Adrenal gland (tissue), 19 donors: ENCODE measurements at regions of chr17 and their contacts with region 1.

Region 1: GRCh38 chr17:42312285-42313130 is 24.2 kb downstream of the STAT5A start:
- DNase-seq: peak; percentile 92 to 96 (median 94)
- H3K4me3 ChIP-seq: peak overlapping the region in 1 of 4 donors; percentile 21
- H3K27ac ChIP-seq: peak overlapping the region; percentile 81 to 96 (median 90)
- H3K4me1 ChIP-seq: peaks cover 26 to 57% of the 10 kb centered on the region in 2 donors
- H3K27me3 ChIP-seq: no peaks in the 10 kb centered on the region
- CTCF ChIP-seq: peak; percentile 36 to 66 (median 57)
- POLR2A ChIP-seq: peak in 1 of 2 donors; percentile 75

Region 2: DNA sequence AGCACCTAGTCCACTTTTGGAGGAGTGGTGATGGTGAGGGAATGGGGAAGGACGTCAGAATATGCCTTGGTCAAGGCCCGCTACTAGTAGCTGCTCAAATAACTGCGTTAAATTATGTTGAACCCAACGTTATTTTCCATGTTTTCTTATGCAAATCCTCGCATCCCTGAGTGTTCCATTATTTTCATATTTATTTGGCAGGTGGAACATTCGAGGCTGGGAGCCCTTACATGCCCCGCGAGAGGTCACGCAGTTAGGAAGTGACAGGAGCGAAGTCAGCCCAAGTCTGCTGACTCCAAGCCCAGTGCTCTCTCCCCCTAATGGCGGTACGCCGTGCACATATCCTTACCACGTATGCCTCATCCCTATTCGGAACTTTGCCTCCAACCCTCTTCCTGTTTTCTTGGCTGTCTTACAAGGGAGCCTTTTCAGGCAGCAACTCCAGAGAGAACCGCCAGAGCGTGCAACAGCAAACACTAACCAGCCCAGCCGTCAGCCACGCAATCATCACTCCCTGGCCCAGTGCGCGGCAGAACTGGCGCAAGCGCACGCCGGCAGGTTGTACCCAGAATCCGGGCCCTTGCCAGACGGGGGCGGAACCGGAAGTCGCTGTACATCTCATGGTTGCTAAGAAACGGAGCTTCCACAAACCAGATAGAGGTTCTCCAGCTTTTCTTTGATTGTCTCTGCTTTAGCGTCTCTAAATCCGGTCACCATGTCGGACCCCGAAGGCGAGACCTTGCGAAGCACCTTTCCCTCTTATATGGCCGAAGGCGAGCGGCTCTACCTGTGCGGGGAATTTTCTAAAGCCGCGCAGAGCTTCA is 382.3 kb before region 1 on chr17 and contains the start of gene ODAD4:
- intact Hi-C with region 1: no loop called
- DNase-seq: peak; percentile 94 to 99 (median 97)
- H3K4me3 ChIP-seq: peak within 1 kb of the TSS; percentile 38 to 65 (median 62)
- H3K27ac ChIP-seq: peak within 1 kb of the TSS in 4 of 5 donors; percentile 70 to 89 (median 76)
- H3K4me1 ChIP-seq: peaks cover 5 to 7% of the 10 kb centered on the region in 2 donors
- H3K27me3 ChIP-seq: no peaks in the 10 kb centered on the region
- CTCF ChIP-seq: peak; percentile 25 to 81 (median 70)
- POLR2A ChIP-seq: peak; percentile 71 to 84
- total RNA-seq, gene ODAD4: 0.39 to 1.4 (median 0.46) TPM in 8 of 9 donors, not detected in the other

Region 3: DNA sequence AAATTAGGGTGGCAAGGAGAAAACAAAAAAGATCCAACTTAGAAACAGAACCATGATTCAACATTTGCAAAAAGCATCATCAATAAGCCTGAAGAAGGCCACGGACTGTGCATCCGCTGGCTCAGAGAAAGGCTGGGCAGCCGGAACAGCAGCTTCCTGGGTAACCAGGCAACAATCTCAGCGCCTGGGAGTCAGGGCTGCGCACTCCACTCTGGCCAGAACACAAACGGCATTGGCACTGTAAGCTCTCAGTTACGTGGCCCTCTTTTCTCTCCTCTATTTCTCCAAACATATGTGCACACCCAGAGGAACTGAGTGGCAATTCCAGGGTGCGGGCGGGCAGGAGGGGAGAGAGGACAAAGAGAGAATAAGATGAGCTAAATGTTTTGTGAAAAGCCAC is 111.8 kb before region 1 on chr17:
- intact Hi-C with region 1: loop called in 1 of 2 experiments (anchors 10 kb)
- DNase-seq: peak; percentile 83 to 95 (median 93)
- H3K4me3 ChIP-seq: no peak overlapping the region
- H3K27ac ChIP-seq: peak overlapping the region; percentile 78 to 92 (median 88)
- H3K4me1 ChIP-seq: peaks cover 8 to 33% of the 10 kb centered on the region in 2 donors
- H3K27me3 ChIP-seq: no peaks in the 10 kb centered on the region
- CTCF ChIP-seq: peak in 1 of 6 experiments; percentile 12
- POLR2A ChIP-seq: peak in 1 of 2 donors; percentile 76

Region 4: DNA sequence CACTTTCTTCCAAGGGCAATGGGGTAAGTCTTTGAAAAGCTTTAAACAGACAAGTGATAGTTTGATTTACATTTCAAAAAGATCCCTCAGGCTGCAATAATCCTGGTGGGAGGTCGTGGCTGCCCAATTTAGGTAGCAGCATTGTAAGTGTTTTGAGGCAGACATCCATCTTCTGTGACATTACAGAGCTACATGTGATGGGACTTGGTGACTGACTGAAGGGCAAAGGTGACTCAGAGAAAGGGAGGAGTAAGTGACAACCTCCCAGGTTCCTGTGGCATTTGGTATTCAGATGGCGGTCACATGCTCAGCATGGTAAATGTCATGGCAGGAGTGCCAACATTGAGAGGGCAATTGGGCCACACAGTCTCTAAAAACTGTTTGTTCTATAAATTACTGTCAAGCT is 49.3 kb after region 1 on chr17:
- intact Hi-C with region 1: no loop called
- DNase-seq: peak in 6 of 7 donors; percentile 55 to 71 (median 68)
- H3K4me3 ChIP-seq: no peak overlapping the region
- H3K27ac ChIP-seq: peak overlapping the region in 4 of 5 donors; percentile 6 to 89 (median 61)
- H3K4me1 ChIP-seq: peaks cover 19 to 75% of the 10 kb centered on the region in 2 donors
- H3K27me3 ChIP-seq: no peaks in the 10 kb centered on the region
- CTCF ChIP-seq: no peak
- POLR2A ChIP-seq: no peak

Region 5: DNA sequence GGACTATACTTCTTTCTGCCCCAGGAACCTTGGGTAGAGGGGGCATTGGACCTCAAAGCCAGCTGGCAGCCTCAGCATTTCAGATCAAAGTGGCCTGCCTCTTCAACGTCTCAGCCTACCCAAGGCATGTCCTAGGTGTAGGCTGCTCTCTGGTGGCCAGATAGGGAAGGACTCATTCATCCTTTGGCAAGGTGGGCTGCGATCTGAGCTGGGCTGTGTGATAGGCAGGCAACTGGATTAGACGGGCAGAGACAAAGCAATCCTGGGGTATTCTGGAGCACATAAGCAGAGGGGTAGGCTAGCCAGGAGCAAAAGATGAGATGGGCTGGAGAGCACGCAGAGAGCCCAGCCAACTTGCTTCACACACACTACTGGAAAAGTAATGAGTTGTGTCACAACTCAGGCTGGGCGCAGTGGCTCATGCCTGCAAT is 214.8 kb after region 1 on chr17:
- intact Hi-C with region 1: loop called in 1 of 2 experiments (anchors 10 kb)
- DNase-seq: peak; percentile 78 to 93 (median 86)
- H3K4me3 ChIP-seq: no peak overlapping the region
- H3K27ac ChIP-seq: peak overlapping the region in 3 of 5 donors; percentile 41 to 99 (median 64)
- H3K4me1 ChIP-seq: peaks cover 35 to 55% of the 10 kb centered on the region in 2 donors
- H3K27me3 ChIP-seq: no peaks in the 10 kb centered on the region
- CTCF ChIP-seq: peak; percentile 76 to 97 (median 92)
- POLR2A ChIP-seq: no peak